ENCODE measurements at regions of chr14 and their contacts with region 1.

Region 1: GRCh38 chr14:69153131-69153872 is 383 bp upstream of the DCAF5 start:
- DNase-seq: peak; percentile 96
- H3K4me3 Mint-ChIP-seq: peak overlapping the region; percentile 91
- H3K27ac Mint-ChIP-seq: peak overlapping the region; percentile 92
- H3K4me1 Mint-ChIP-seq: peaks cover 33% of the 10 kb centered on the region
- H3K27me3 Mint-ChIP-seq: no peaks in the 10 kb centered on the region

Region 2: GRCh38 chr14:69191340-69192111 is 38.2 kb after region 1 on chr14 and contains the start of gene EXD2:
- CTCF ChIA-PET with region 1: interaction called, 6 read pairs
- POLR2A ChIA-PET with region 1: interaction called, 8 read pairs
- intact Hi-C with region 1: loop called (anchors 1 kb)
- DNase-seq: peak; percentile 88
- H3K4me3 Mint-ChIP-seq: peak within 1 kb of the TSS; percentile 85
- H3K27ac Mint-ChIP-seq: peak within 1 kb of the TSS; percentile 78
- H3K4me1 Mint-ChIP-seq: peaks cover 12% of the 10 kb centered on the region
- H3K27me3 Mint-ChIP-seq: no peaks in the 10 kb centered on the region
- total RNA-seq, gene EXD2: 10.5 to 11.5 TPM